ENCODE measurements at regions of chr4 and their contacts with region 1.

Region 1: DNA sequence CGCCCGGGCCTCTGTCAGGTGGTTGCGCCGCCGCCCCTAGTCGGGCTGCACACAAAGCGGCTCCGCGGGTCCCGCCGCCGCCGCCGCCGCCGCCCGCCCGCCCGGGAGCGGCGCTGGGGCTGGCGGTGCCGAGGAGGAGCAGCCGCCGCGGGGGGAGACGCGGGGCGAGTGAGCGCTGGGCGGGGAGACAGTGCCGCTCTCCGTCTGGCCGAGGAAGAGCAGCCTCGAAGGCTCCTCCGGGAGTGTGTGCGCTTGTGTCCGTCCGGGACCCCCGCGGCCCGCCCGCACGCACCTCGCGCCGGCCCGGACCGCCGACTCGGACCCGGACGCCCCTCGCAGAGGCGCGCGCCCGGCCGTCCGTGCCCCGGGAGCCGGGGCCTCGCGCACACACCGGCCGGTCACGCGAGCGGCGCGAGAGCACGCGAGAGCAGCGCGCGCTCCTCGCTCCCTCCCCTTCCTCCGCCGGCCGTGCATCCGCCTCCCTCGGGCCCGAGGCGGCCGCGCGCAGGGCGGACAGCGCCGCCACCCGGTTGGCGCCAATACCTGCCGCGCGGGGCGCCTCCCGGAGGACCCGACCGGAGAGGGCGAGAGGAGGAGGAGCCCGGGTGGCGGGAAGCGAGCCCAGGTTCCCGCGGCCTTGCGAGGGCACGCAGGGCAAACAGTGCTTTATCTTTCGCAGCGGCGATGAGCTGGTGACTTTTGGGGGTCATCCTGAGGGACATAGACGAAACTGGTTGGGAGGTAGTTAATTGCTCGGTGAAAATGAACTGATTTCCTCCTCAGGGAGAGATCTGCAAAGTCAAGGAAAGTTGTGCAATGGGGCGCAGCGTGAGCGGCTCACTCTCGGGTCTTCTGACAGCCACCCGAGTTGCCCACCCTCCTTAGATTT is at the start of gene PDS5A:
- DNase-seq: peak; percentile 91
- ATAC-seq: peak; percentile 86
- H3K4me3 Mint-ChIP-seq: peak within 1 kb of the TSS; percentile 87
- H3K27ac Mint-ChIP-seq: peak within 1 kb of the TSS; percentile 92
- H3K4me1 Mint-ChIP-seq: peaks cover 32% of the 10 kb centered on the region
- H3K27me3 Mint-ChIP-seq: no peaks in the 10 kb centered on the region
- CTCF ChIP-seq: peak; percentile 27
- total RNA-seq, gene PDS5A: 91.9 and 103 TPM in 2 replicates

Region 2: GRCh38 chr4:38902695-38903094 is 1075.0 kb before region 1 on chr4:
- CTCF ChIA-PET with region 1: no interaction called
- POLR2A ChIA-PET with region 1: no interaction called
- intact Hi-C with region 1: loop called (anchors 10 kb)
- DNase-seq: no peak
- ATAC-seq: peak; percentile 71
- H3K4me3 Mint-ChIP-seq: no peak overlapping the region
- H3K27ac Mint-ChIP-seq: no peak overlapping the region
- H3K4me1 Mint-ChIP-seq: peaks cover 2% of the 10 kb centered on the region
- H3K27me3 Mint-ChIP-seq: no peaks in the 10 kb centered on the region
- CTCF ChIP-seq: peak; percentile 45

Region 3: GRCh38 chr4:39458505-39459300 is 519.0 kb before region 1 on chr4 and contains the starts of genes LIAS and RPL9:
- CTCF ChIA-PET with region 1: interaction called, 3 read pairs
- POLR2A ChIA-PET with region 1: interaction called, 4 read pairs
- intact Hi-C with region 1: loop called (anchors 2 kb)
- DNase-seq: peak; percentile 90
- ATAC-seq: peak; percentile 81
- H3K4me3 Mint-ChIP-seq: peak within 1 kb of the TSS; percentile 97
- H3K27ac Mint-ChIP-seq: peak within 1 kb of the TSS; percentile 98
- H3K4me1 Mint-ChIP-seq: peaks cover 36% of the 10 kb centered on the region
- H3K27me3 Mint-ChIP-seq: no peaks in the 10 kb centered on the region
- CTCF ChIP-seq: no peak
- total RNA-seq, gene LIAS: 19.5 and 20.5 TPM in 2 replicates
- total RNA-seq, gene RPL9: 2,632 and 2,865 TPM in 2 replicates

Region 4: DNA sequence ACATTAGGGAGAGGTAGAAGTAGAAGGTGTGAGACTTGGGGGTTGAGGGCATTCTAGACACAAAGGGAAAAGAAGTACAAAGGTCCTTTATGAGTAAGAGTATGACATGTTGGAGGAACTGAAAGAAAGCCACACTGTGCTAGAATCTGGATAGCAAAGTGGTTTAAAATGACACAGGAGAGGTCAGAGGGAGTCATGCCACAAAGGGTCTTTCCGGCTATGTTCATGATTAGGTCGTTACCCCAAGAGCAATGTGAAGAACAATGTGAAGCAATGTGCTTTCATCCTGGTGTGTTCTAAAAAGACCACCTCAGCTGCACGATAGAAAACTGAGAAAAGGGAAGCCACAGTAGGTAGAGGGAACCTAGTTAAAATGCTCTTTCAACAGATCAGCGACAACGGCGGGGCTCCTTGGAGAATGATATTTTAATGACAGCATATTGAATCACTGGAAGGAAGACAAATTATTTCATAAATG is 368.2 kb before region 1 on chr4:
- CTCF ChIA-PET with region 1: no interaction called
- POLR2A ChIA-PET with region 1: no interaction called
- intact Hi-C with region 1: loop called (anchors 5 kb)
- DNase-seq: no peak
- ATAC-seq: peak; percentile 84
- H3K4me3 Mint-ChIP-seq: peak overlapping the region; percentile 75
- H3K27ac Mint-ChIP-seq: peak overlapping the region; percentile 88
- H3K4me1 Mint-ChIP-seq: peaks cover 67% of the 10 kb centered on the region
- H3K27me3 Mint-ChIP-seq: no peaks in the 10 kb centered on the region
- CTCF ChIP-seq: no peak

Region 5: DNA sequence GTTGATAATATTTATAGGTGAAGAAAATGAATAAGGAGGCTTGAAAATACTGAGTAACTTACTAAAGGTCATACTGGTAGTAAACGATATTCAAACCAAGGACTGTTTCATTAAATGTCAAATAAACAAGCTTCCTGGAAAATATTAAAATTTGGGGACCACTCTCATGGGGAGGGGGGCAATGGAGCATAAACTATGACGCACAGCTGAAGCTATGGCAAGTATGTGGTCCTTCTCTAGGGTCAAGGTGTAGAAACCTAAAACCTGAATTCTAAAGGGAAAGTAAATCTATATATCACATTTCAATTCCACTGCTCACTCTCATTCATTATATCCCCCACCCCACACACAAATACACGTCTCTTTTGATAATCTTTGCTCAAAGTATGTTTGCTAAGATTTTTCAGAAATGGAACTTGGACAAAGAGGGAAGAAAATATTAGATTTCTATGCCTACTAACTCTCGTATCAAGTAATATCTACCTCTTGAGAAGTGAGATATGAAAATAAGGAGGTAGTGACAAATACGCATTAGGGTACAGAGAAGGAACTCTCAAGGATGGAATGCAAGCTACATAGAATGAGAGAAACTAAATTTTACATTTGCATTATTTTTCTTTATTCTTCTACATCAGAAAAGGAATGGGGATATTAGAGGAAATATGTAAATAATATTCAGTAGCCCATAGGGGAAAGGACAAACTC is 84.6 kb before region 1 on chr4:
- CTCF ChIA-PET with region 1: no interaction called
- POLR2A ChIA-PET with region 1: no interaction called
- intact Hi-C with region 1: loop called (anchors 5 kb)
- DNase-seq: no peak
- ATAC-seq: peak; percentile 73
- H3K4me3 Mint-ChIP-seq: peak overlapping the region; percentile 2
- H3K27ac Mint-ChIP-seq: peak overlapping the region; percentile 33
- H3K4me1 Mint-ChIP-seq: peaks cover 17% of the 10 kb centered on the region
- H3K27me3 Mint-ChIP-seq: no peaks in the 10 kb centered on the region
- CTCF ChIP-seq: no peak

Region 6: DNA sequence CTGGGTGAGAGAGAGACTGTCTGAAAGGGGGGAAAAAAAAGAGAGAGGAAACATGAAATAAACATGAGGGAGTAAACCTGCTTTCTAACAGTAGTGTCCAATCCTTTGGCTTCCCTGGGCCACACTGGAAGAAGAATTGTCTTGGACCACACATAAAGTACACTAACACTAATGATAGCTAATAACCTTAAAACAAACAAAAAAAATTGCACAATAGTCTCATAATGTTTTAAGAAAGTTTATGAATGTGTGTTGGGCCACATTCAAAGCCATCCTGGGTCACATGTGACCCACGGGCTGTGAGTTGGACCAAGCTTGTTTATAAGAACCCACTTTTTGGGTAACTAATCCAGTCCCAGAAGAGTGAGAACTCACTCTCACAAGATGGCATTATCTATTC is 30.3 kb before region 1 on chr4:
- CTCF ChIA-PET with region 1: no interaction called
- POLR2A ChIA-PET with region 1: no interaction called
- intact Hi-C with region 1: no loop called
- DNase-seq: no peak
- ATAC-seq: no peak
- H3K4me3 Mint-ChIP-seq: no peak overlapping the region
- H3K27ac Mint-ChIP-seq: peak overlapping the region; percentile 93
- H3K4me1 Mint-ChIP-seq: peaks cover 67% of the 10 kb centered on the region
- H3K27me3 Mint-ChIP-seq: no peaks in the 10 kb centered on the region
- CTCF ChIP-seq: no peak

Region 7: GRCh38 chr4:40254608-40255392 is 277.1 kb after region 1 on chr4:
- CTCF ChIA-PET with region 1: no interaction called
- POLR2A ChIA-PET with region 1: interaction called, 10 read pairs
- intact Hi-C with region 1: no loop called
- DNase-seq: no peak
- ATAC-seq: no peak
- H3K4me3 Mint-ChIP-seq: no peak overlapping the region
- H3K27ac Mint-ChIP-seq: no peak overlapping the region
- H3K4me1 Mint-ChIP-seq: peaks cover 37% of the 10 kb centered on the region
- H3K27me3 Mint-ChIP-seq: no peaks in the 10 kb centered on the region
- CTCF ChIP-seq: no peak

Measured in activated B cell treated with CpG ODN at 0.5 μM for 24 hours (primary cell).